Sigmoid colon (tissue), 7 donors: ENCODE measurements at regions of chr3 and their contacts with region 1.

Region 1: GRCh38 chr3:159804726-159805410 is 183.8 kb upstream of the IL12A start:
- DNase-seq: peak; percentile 90
- H3K4me3 ChIP-seq: no peak overlapping the region
- H3K27ac ChIP-seq: peak overlapping the region; percentile 77 to 90 (median 83)
- H3K4me1 ChIP-seq: peaks cover 0 to 85% (median 70%) of the 10 kb centered on the region in 4 donors
- H3K27me3 ChIP-seq: no peaks in the 10 kb centered on the region
- CTCF ChIP-seq: peak; percentile 77 to 87 (median 84)
- EP300 ChIP-seq: no peak
- POLR2A ChIP-seq: no peak

Region 2: DNA sequence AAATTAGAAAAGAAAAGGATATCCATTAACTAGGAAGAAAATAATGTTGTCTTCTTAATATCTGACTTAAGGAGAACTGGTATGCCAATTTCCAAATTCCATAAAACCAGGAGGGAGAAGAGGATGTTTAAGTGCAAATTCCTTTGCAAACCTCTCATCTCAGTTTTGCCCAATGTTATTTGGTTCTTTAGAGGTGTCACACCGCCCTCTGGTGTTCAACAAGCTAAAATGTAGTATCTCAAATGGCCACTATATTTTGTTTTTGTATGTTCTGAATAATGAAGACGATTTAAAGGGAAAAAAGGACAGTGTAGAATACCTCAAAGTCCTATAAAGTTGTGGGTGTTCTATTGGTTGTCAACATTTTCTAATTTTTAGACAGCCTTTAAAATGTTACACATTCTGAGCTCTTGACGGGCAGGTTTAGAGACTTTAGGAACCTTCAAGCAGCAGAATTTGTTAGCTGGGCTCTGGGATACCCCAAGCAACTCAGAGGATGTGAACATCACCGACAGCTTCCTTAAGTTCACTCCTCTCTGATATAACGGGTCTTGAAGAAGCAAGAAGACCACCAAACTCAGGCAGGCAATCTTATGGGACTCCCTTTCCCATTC is 544.7 kb before region 1 on chr3:
- intact Hi-C with region 1: loop called (anchors 5 kb)
- DNase-seq: no peak
- H3K4me3 ChIP-seq: no peak overlapping the region
- H3K27ac ChIP-seq: no peak overlapping the region
- H3K4me1 ChIP-seq: no peaks in the 10 kb centered on the region
- H3K27me3 ChIP-seq: no peaks in the 10 kb centered on the region
- CTCF ChIP-seq: peak; percentile 11 to 68 (median 54)
- EP300 ChIP-seq: no peak
- POLR2A ChIP-seq: no peak

Region 3: GRCh38 chr3:159616212-159616825 is 188.5 kb before region 1 on chr3:
- intact Hi-C with region 1: loop called (anchors 1 kb)
- DNase-seq: no peak
- H3K4me3 ChIP-seq: no peak overlapping the region
- H3K27ac ChIP-seq: no peak overlapping the region
- H3K4me1 ChIP-seq: peaks cover 0 to 8% (median 3%) of the 10 kb centered on the region in 4 donors
- H3K27me3 ChIP-seq: no peaks in the 10 kb centered on the region
- CTCF ChIP-seq: peak; percentile 56 to 77 (median 64)
- EP300 ChIP-seq: no peak
- POLR2A ChIP-seq: no peak

Region 4: DNA sequence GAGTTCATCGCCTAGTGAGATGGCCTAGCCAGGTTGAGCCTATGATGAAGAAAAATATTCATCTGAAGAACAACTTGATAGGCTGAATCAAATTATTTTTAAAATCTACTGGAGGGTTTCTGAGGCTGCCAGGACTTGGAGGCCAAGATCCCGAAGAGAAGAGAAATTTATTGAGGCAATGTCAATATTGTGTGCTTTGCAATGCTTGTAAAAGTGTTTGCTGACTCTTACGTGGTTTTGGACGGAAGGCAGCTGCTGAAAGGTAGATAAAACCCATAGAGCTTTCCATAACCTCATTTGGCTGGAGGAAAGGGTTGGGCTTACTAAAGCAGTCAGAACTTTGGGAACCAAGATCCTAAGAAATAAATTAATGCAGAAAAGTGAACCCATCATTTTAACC is 177.2 kb before region 1 on chr3:
- intact Hi-C with region 1: no loop called
- DNase-seq: no peak
- H3K4me3 ChIP-seq: no peak overlapping the region
- H3K27ac ChIP-seq: no peak overlapping the region
- H3K4me1 ChIP-seq: no peaks in the 10 kb centered on the region
- H3K27me3 ChIP-seq: no peaks in the 10 kb centered on the region
- CTCF ChIP-seq: no peak
- EP300 ChIP-seq: no peak
- POLR2A ChIP-seq: no peak

Region 5: DNA sequence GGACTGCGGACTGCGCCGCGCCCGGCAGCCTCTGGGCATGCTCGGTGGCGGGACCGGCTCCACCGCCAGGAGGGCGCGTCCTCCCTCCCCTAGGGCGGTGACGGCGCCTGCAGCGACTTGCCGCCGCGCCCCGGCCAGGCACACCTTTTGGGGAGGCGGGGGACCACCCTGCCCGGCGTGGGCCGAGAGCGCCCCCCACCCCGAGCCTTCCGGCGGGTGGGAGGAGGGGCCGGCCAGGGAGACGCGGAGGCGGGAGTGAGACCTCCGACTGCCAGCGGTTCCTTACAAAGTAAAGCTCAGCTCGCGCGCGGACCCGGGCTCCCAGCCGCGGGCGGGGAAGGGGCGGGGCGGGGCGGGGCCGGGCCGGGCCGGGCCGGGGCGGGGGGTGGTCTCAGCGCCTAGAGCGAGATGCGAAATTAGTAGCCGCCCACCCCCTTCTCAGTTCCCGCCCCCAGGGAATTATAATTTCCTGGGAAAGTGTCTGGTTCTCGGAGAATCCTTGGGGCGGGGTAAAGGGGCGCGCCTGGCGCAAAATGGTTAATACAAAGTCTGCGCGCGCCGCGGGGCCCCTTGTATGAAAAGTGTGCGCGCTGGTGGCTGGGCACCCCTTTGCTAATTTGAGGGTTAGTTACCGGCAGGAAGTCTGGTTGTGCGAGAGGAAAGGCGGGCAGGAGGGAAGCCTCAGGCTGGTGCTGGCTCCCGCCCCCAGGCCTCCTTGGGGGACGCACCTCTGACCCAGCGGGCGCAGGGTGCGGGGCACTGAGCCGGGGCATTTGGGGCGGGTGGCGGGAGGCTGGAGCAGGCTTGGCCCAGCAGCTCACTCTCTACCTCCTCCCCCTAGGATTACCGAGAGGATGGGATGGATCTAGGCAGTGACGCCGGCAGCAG is 41.0 kb before region 1 on chr3:
- intact Hi-C with region 1: loop called (anchors 2 kb)
- DNase-seq: peak; percentile 90
- H3K4me3 ChIP-seq: peak overlapping the region; percentile 80 to 91 (median 86)
- H3K27ac ChIP-seq: peak overlapping the region; percentile 97 to 100 (median 100)
- H3K4me1 ChIP-seq: peaks cover 0 to 54% (median 49%) of the 10 kb centered on the region in 4 donors
- H3K27me3 ChIP-seq: no peaks in the 10 kb centered on the region
- CTCF ChIP-seq: peak; percentile 18 to 69 (median 44)
- EP300 ChIP-seq: no peak
- POLR2A ChIP-seq: peak; percentile 27 to 66

Region 6: GRCh38 chr3:160399125-160400029 is 594.5 kb after region 1 on chr3 and contains the starts of genes IFT80 and SMC4:
- intact Hi-C with region 1: loop called (anchors 10 kb)
- DNase-seq: peak; percentile 98
- H3K4me3 ChIP-seq: peak within 1 kb of the TSS; percentile 61 to 76 (median 68)
- H3K27ac ChIP-seq: peak within 1 kb of the TSS; percentile 84 to 90 (median 86)
- H3K4me1 ChIP-seq: peaks cover 0 to 26% (median 19%) of the 10 kb centered on the region in 4 donors
- H3K27me3 ChIP-seq: peaks cover 0 to 36% (median 15%) of the 10 kb centered on the region in 3 donors
- CTCF ChIP-seq: peak in 1 of 4 experiments; percentile 14
- EP300 ChIP-seq: no peak
- POLR2A ChIP-seq: no peak
- total RNA-seq, gene IFT80: 15.0 to 22.8 (median 17.2) TPM
- total RNA-seq, gene SMC4: 25.1 to 44.6 (median 31.3) TPM